ENCODE measurements at regions of chr15 and their contacts with region 1.

Region 1: GRCh38 chr15:71800835-71801745 is 9.3 kb upstream of the NR2E3 start:
- DNase-seq: peak; percentile 89
- ATAC-seq: peak; percentile 95
- H3K4me3 ChIP-seq: no peak overlapping the region
- H3K27ac ChIP-seq: peak overlapping the region; percentile 1; the same call in 1 of the 2 replicates
- H3K4me1 ChIP-seq: 0 out of 2 replicates have a peak, but pooled peaks cover 3% of the 10 kb centered on the region
- H3K27me3 ChIP-seq: no peaks in the 10 kb centered on the region
- CTCF ChIP-seq: peak; percentile 94
- POLR2A ChIP-seq: peak; percentile 33; the same call in 1 of the 2 replicates
- RAD21 ChIP-seq: peak; percentile 95

Region 2: GRCh38 chr15:70974004-70974832 is 826.9 kb before region 1 on chr15:
- CTCF ChIA-PET with region 1: no interaction called
- POLR2A ChIA-PET with region 1: no interaction called
- dilution Hi-C with region 1: no loop called
- in situ Hi-C with region 1: loop called (anchors 10 kb)
- intact Hi-C with region 1: loop called (anchors 2 kb)
- DNase-seq: peak; percentile 83
- ATAC-seq: peak; percentile 90
- H3K4me3 ChIP-seq: no peak overlapping the region
- H3K27ac ChIP-seq: no peak overlapping the region; the same call in 1 of the 2 replicates
- H3K4me1 ChIP-seq: peaks cover 4% of the 10 kb centered on the region
- H3K27me3 ChIP-seq: no peaks in the 10 kb centered on the region
- CTCF ChIP-seq: peak; percentile 63
- POLR2A ChIP-seq: no peak
- RAD21 ChIP-seq: peak; percentile 75

Region 3: GRCh38 chr15:71386448-71387236 is 414.4 kb before region 1 on chr15:
- CTCF ChIA-PET with region 1: no interaction called
- POLR2A ChIA-PET with region 1: no interaction called
- dilution Hi-C with region 1: no loop called
- in situ Hi-C with region 1: no loop called
- intact Hi-C with region 1: loop called (anchors 2 kb)
- DNase-seq: peak; percentile 38
- ATAC-seq: no peak
- H3K4me3 ChIP-seq: no peak overlapping the region
- H3K27ac ChIP-seq: no peak overlapping the region
- H3K4me1 ChIP-seq: peaks cover 16% of the 10 kb centered on the region
- H3K27me3 ChIP-seq: no peaks in the 10 kb centered on the region
- CTCF ChIP-seq: peak; percentile 48
- POLR2A ChIP-seq: no peak
- RAD21 ChIP-seq: peak; percentile 65

Region 4: GRCh38 chr15:71575474-71576045 is 225.5 kb before region 1 on chr15:
- CTCF ChIA-PET with region 1: no interaction called
- POLR2A ChIA-PET with region 1: no interaction called
- dilution Hi-C with region 1: no loop called
- in situ Hi-C with region 1: no loop called
- intact Hi-C with region 1: loop called (anchors 1 kb)
- DNase-seq: no peak
- ATAC-seq: peak; percentile 66
- H3K4me3 ChIP-seq: no peak overlapping the region
- H3K27ac ChIP-seq: no peak overlapping the region
- H3K4me1 ChIP-seq: no peaks in the 10 kb centered on the region
- H3K27me3 ChIP-seq: no peaks in the 10 kb centered on the region
- CTCF ChIP-seq: peak; percentile 56
- POLR2A ChIP-seq: no peak
- RAD21 ChIP-seq: peak; percentile 50

Region 5: GRCh38 chr15:71743861-71744382 is 57.2 kb before region 1 on chr15:
- CTCF ChIA-PET with region 1: interaction called, 6 read pairs
- POLR2A ChIA-PET with region 1: no interaction called
- dilution Hi-C with region 1: no loop called
- in situ Hi-C with region 1: no loop called
- intact Hi-C with region 1: loop called (anchors 1 kb)
- DNase-seq: peak; percentile 69
- ATAC-seq: peak; percentile 71
- H3K4me3 ChIP-seq: no peak overlapping the region
- H3K27ac ChIP-seq: no peak overlapping the region
- H3K4me1 ChIP-seq: peaks cover 13% of the 10 kb centered on the region
- H3K27me3 ChIP-seq: no peaks in the 10 kb centered on the region
- CTCF ChIP-seq: peak; percentile 74
- POLR2A ChIP-seq: no peak
- RAD21 ChIP-seq: peak; percentile 60